ENCODE measurements at regions of chr6 and their contacts with region 1.

Region 1: DNA sequence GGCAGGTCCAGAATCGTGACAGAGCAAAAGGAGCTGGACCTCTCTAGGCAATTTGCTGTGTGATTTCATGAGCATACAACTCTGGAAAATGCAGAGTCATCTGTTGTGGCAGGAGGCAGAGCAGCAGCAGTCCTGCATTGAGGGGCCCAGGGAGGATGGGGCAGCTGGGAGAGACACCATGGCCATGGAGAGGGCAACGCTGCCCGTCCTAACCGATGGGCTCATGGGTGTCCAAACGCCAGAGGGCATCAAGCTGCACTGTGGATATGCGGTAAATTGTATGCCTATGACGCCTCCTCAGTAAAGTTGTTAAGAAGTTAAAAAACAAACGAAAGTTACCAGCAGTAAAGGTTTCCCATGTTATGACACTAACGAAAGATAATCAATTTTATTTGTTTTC is 42.2 kb upstream of the DACT2 start:
- DNase-seq: no peak
- ATAC-seq: no peak
- H3K4me3 ChIP-seq: no peak overlapping the region
- H3K27ac ChIP-seq: no peak overlapping the region
- H3K4me1 ChIP-seq: no peaks in the 10 kb centered on the region
- H3K27me3 ChIP-seq: peaks cover 0 to 20% (median 8%) of the 10 kb centered on the region in 7 donors
- CTCF ChIP-seq: no peak

Region 2: GRCh38 chr6:168388641-168389381 is 27.0 kb after region 1 on chr6:
- intact Hi-C with region 1: loop called in 1 of 10 experiments (anchors 1 kb)
- DNase-seq: no peak
- ATAC-seq: no peak
- H3K4me3 ChIP-seq: no peak overlapping the region
- H3K27ac ChIP-seq: no peak overlapping the region
- H3K4me1 ChIP-seq: peaks cover 0 to 4% (median 0%) of the 10 kb centered on the region in 9 donors
- H3K27me3 ChIP-seq: peaks cover 0 to 12% (median 0%) of the 10 kb centered on the region in 7 donors
- CTCF ChIP-seq: no peak

Region 3: GRCh38 chr6:168658059-168658458 is 296.3 kb after region 1 on chr6:
- intact Hi-C with region 1: no loop called
- DNase-seq: no peak
- ATAC-seq: no peak
- H3K4me3 ChIP-seq: no peak overlapping the region
- H3K27ac ChIP-seq: no peak overlapping the region
- H3K4me1 ChIP-seq: no peaks in the 10 kb centered on the region
- H3K27me3 ChIP-seq: peaks cover 0 to 7% (median 0%) of the 10 kb centered on the region in 7 donors
- CTCF ChIP-seq: peak in 1 of 9 donors; percentile 5

Measured in heart right ventricle (tissue), 16 donors.